ENCODE measurements at regions of chr2 and their contacts with region 1.

Region 1: GRCh38 chr2:171469176-171469575 is 35.1 kb downstream of the DCAF17 start:
- DNase-seq: no peak
- ATAC-seq: no peak
- H3K4me3 ChIP-seq: no peak overlapping the region
- H3K27ac ChIP-seq: no peak overlapping the region
- H3K4me1 ChIP-seq: no peaks in the 10 kb centered on the region
- H3K27me3 ChIP-seq: no peaks in the 10 kb centered on the region
- CTCF ChIP-seq: no peak

Region 2: DNA sequence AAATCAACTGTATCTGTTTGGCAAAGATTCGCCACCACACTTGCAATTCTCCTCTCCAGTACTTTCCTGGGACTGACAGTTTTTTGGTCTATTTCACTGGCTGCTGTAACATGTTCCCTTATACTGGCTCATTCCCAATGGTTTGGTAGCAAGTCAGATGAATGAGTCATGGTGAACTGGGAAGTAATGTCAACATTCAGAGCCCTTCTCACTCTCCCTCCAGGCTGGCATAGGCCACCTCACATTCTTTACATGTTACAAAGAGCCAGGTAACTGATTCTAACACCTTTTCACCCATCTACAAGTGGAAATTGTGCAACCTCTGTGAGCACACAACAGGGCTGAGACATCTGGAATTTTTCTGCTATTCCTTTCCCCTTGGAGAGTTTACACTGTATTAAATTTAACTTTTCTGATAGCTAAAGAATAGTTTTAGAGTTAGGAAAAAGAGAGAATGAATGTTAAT is 197.2 kb before region 1 on chr2:
- CTCF ChIA-PET with region 1: no interaction called
- POLR2A ChIA-PET with region 1: no interaction called
- in situ Hi-C with region 1: no loop called
- intact Hi-C with region 1: no loop called
- DNase-seq: peak; percentile 85
- ATAC-seq: peak; percentile 100
- H3K4me3 ChIP-seq: no peak overlapping the region
- H3K27ac ChIP-seq: peak overlapping the region; percentile 73
- H3K4me1 ChIP-seq: peaks cover 16% of the 10 kb centered on the region
- H3K27me3 ChIP-seq: no peaks in the 10 kb centered on the region
- CTCF ChIP-seq: no peak

Region 3: DNA sequence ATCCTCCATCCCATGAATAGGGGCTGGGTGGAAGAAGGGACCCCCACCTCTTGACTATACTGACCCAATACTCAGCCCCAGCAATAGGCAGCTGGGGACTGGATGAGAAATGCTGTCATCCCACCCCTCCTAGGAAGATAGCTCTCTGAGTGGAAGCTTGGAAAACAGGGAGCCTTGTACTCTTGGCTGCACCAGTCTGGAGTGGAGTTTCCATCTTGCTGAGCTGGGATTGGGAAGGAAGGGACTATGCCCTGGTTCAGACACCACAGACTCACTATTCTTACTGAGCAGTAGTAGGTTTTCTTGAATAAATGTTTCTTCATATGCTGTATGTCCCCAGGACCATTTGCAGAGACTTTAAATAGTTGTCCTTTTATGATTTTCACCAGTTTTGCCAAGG is 27.7 kb before region 1 on chr2:
- CTCF ChIA-PET with region 1: no interaction called
- POLR2A ChIA-PET with region 1: interaction called, 14 read pairs
- in situ Hi-C with region 1: no loop called
- intact Hi-C with region 1: no loop called
- DNase-seq: no peak
- ATAC-seq: no peak
- H3K4me3 ChIP-seq: no peak overlapping the region
- H3K27ac ChIP-seq: no peak overlapping the region
- H3K4me1 ChIP-seq: no peaks in the 10 kb centered on the region
- H3K27me3 ChIP-seq: no peaks in the 10 kb centered on the region
- CTCF ChIP-seq: no peak

Measured in Panc1 (cell line).